CD4-positive, alpha-beta T cell (primary cell): ENCODE measurements at regions of chr5 and their contacts with region 1.

Region 1: GRCh38 chr5:157265714-157266285 is at the start of gene CYFIP2:
- DNase-seq: peak; percentile 75 to 94 (median 84)
- ATAC-seq: peak; percentile 84
- H3K4me3 ChIP-seq: peak within 1 kb of the TSS; percentile 79
- H3K4me3 Mint-ChIP-seq: peak within 1 kb of the TSS; percentile 99
- H3K27ac ChIP-seq: peak within 1 kb of the TSS; percentile 77 to 94
- H3K27ac Mint-ChIP-seq: peak within 1 kb of the TSS; percentile 97
- H3K4me1 ChIP-seq: peaks cover 63% of the 10 kb centered on the region
- H3K4me1 Mint-ChIP-seq: peaks cover 81% of the 10 kb centered on the region
- H3K27me3 ChIP-seq: no peaks in the 10 kb centered on the region
- H3K27me3 Mint-ChIP-seq: no peaks in the 10 kb centered on the region
- CTCF ChIP-seq: no peak
- total RNA-seq, gene CYFIP2: 271 to 287 TPM

Region 2: GRCh38 chr5:156715287-156715686 is 550.5 kb before region 1 on chr5:
- CTCF ChIA-PET with region 1: no interaction called
- POLR2A ChIA-PET with region 1: no interaction called
- intact Hi-C with region 1: no loop called
- DNase-seq: no peak
- ATAC-seq: no peak
- H3K4me3 ChIP-seq: no peak overlapping the region
- H3K4me3 Mint-ChIP-seq: no peak overlapping the region
- H3K27ac ChIP-seq: no peak overlapping the region
- H3K27ac Mint-ChIP-seq: no peak overlapping the region
- H3K4me1 ChIP-seq: no peaks in the 10 kb centered on the region
- H3K4me1 Mint-ChIP-seq: no peaks in the 10 kb centered on the region
- H3K27me3 ChIP-seq: no peaks in the 10 kb centered on the region
- H3K27me3 Mint-ChIP-seq: peaks cover 28% of the 10 kb centered on the region
- CTCF ChIP-seq: no peak

Region 3: DNA sequence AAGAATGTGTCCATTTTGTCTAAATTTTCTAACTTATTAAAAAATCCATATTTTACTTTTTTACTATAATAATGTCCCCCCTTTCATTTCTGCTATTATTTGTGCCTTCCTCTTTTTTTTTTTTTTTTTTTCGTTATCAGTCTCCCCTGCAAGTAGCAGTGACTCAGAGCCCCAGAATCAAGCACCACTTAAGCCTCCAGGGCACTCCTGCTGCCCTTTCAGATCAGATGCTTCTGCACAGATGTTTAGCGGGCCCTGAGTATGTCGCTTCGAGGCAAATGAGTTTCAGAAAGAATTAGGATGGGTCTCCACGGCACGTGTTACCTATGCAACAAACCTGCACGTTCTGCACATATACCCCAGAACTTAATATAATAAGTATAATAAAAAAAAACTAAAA is 134.9 kb before region 1 on chr5:
- CTCF ChIA-PET with region 1: no interaction called
- POLR2A ChIA-PET with region 1: no interaction called
- intact Hi-C with region 1: no loop called
- DNase-seq: no peak
- ATAC-seq: no peak
- H3K4me3 ChIP-seq: no peak overlapping the region
- H3K4me3 Mint-ChIP-seq: no peak overlapping the region
- H3K27ac ChIP-seq: no peak overlapping the region
- H3K27ac Mint-ChIP-seq: no peak overlapping the region
- H3K4me1 ChIP-seq: peaks cover 8% of the 10 kb centered on the region
- H3K4me1 Mint-ChIP-seq: peaks cover 33% of the 10 kb centered on the region
- H3K27me3 ChIP-seq: no peaks in the 10 kb centered on the region
- H3K27me3 Mint-ChIP-seq: no peaks in the 10 kb centered on the region
- CTCF ChIP-seq: no peak

Region 4: GRCh38 chr5:157198277-157198986 is 67.4 kb before region 1 on chr5:
- CTCF ChIA-PET with region 1: interaction called, 4 read pairs
- POLR2A ChIA-PET with region 1: interaction called, 9 read pairs
- intact Hi-C with region 1: loop called in 1 of 2 experiments (anchors 2 kb)
- DNase-seq: peak in 13 of 14 experiments; percentile 31 to 80 (median 59)
- ATAC-seq: peak; percentile 39
- H3K4me3 ChIP-seq: no peak overlapping the region
- H3K4me3 Mint-ChIP-seq: peak overlapping the region; percentile 49
- H3K27ac ChIP-seq: peak overlapping the region; percentile 63 to 79
- H3K27ac Mint-ChIP-seq: peak overlapping the region; percentile 96
- H3K4me1 ChIP-seq: peaks cover 80% of the 10 kb centered on the region
- H3K4me1 Mint-ChIP-seq: peaks cover 99% of the 10 kb centered on the region
- H3K27me3 ChIP-seq: no peaks in the 10 kb centered on the region
- H3K27me3 Mint-ChIP-seq: no peaks in the 10 kb centered on the region
- CTCF ChIP-seq: no peak

Region 5: DNA sequence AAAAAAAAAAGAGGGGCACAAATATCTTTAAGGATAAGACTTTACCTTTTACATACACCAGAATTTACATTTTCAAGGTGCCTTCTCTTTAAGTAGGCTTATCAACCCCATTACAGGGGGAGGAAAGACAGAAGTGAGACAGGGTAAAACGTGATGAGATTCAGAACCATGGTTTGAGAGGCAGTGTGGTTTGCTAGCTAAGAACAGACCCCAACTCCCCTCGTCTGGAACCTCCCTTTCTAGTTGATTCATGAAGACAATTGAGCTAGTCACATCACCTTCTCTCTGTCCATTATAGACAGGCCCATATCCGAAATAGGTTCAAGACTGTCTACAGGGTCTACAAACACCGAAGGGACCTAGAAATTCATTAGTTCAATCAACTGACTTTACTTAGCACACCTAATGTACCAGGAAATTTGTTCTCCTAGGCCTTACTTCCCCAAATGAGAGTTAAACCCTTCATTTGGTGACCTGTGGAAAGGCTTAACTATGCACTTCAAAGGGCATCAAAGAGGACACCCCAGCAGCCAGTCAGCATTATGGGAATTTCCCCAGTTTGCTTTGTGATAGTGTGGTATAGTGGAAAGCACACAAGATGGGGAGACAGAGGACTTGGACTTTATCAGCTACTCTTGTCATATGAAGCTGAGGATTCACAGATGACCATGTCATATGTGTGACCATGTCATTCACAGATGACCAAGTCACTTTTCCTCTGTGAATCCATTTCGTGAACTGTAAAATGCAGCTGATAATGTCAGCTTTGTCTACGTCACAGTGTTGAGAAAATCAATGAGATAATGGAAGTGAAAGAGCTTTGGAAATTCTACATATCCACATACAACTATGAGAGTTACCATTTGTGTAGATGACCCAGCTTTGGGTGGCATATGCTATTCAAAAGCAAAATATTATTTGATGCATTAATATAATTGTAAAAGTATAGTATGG is 40.1 kb before region 1 on chr5:
- CTCF ChIA-PET with region 1: no interaction called
- POLR2A ChIA-PET with region 1: no interaction called
- intact Hi-C with region 1: no loop called
- DNase-seq: peak in 3 of 14 experiments; percentile 32 to 76 (median 69)
- ATAC-seq: no peak
- H3K4me3 ChIP-seq: no peak overlapping the region
- H3K4me3 Mint-ChIP-seq: peak overlapping the region; percentile 20
- H3K27ac ChIP-seq: peak overlapping the region; percentile 41 to 44
- H3K27ac Mint-ChIP-seq: peak overlapping the region; percentile 80
- H3K4me1 ChIP-seq: peaks cover 65% of the 10 kb centered on the region
- H3K4me1 Mint-ChIP-seq: peaks cover 63% of the 10 kb centered on the region
- H3K27me3 ChIP-seq: no peaks in the 10 kb centered on the region
- H3K27me3 Mint-ChIP-seq: no peaks in the 10 kb centered on the region
- CTCF ChIP-seq: no peak

Region 6: GRCh38 chr5:157283434-157283833 is 17.6 kb after region 1 on chr5:
- CTCF ChIA-PET with region 1: interaction called, 3 read pairs
- POLR2A ChIA-PET with region 1: interaction called, 17 read pairs
- intact Hi-C with region 1: loop called in 1 of 2 experiments (anchors 2 kb)
- DNase-seq: peak in 5 of 14 experiments; percentile 14 to 54 (median 52)
- ATAC-seq: peak; percentile 86
- H3K4me3 ChIP-seq: no peak overlapping the region
- H3K4me3 Mint-ChIP-seq: peak overlapping the region; percentile 52
- H3K27ac ChIP-seq: peak overlapping the region in 1 of 2 donors; percentile 24
- H3K27ac Mint-ChIP-seq: peak overlapping the region; percentile 83
- H3K4me1 ChIP-seq: peaks cover 66% of the 10 kb centered on the region
- H3K4me1 Mint-ChIP-seq: peaks cover 90% of the 10 kb centered on the region
- H3K27me3 ChIP-seq: no peaks in the 10 kb centered on the region
- H3K27me3 Mint-ChIP-seq: no peaks in the 10 kb centered on the region
- CTCF ChIP-seq: no peak

Region 7: DNA sequence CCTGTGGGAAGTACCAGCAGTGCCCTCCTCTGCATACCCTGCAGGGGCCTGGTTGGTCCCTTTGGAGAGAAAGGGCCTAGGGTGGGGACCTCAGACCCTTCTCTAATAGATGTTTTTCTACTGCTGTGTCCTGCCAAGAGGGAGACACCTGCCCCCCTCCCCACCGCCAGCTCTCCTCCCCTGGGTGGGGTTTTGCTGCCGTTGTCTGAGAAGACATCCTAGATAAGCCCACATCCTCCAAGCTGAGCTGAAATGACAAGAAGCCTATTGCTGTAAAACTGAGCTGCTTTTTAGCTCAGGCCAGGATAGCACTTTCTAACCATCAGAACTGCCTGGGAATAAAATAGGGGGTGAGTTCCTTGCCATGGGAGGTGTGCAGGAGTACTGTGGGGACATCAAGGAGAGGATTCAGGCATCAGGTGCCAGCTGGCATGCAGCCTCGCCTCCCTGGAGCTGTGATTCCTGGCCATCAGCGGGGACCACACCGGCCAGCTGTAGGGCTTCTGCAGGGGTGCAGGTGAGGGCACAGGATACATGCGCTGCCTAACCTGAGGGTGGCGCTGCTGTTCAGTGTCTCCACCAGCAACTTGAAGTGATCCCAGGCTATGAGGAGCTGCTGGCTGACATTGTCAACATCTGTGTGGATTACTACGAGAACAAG is 38.0 kb after region 1 on chr5:
- CTCF ChIA-PET with region 1: interaction called, 6 read pairs
- POLR2A ChIA-PET with region 1: interaction called, 21 read pairs
- intact Hi-C with region 1: loop called in 1 of 2 experiments (anchors 5 kb)
- DNase-seq: peak; percentile 45 to 86 (median 56)
- ATAC-seq: peak; percentile 72
- H3K4me3 ChIP-seq: peak overlapping the region; percentile 42
- H3K4me3 Mint-ChIP-seq: peak overlapping the region; percentile 87
- H3K27ac ChIP-seq: peak overlapping the region; percentile 54 to 65
- H3K27ac Mint-ChIP-seq: peak overlapping the region; percentile 80
- H3K4me1 ChIP-seq: peaks cover 57% of the 10 kb centered on the region
- H3K4me1 Mint-ChIP-seq: peaks cover 70% of the 10 kb centered on the region
- H3K27me3 ChIP-seq: no peaks in the 10 kb centered on the region
- H3K27me3 Mint-ChIP-seq: no peaks in the 10 kb centered on the region
- CTCF ChIP-seq: peak; percentile 26

Region 8: GRCh38 chr5:157312492-157312891 is 46.7 kb after region 1 on chr5:
- CTCF ChIA-PET with region 1: interaction called, 6 read pairs
- POLR2A ChIA-PET with region 1: interaction called, 11 read pairs
- intact Hi-C with region 1: loop called (anchors 2 to 5 kb)
- DNase-seq: peak; percentile 41 to 88 (median 56)
- ATAC-seq: peak; percentile 92
- H3K4me3 ChIP-seq: no peak overlapping the region
- H3K4me3 Mint-ChIP-seq: peak overlapping the region; percentile 40
- H3K27ac ChIP-seq: no peak overlapping the region
- H3K27ac Mint-ChIP-seq: peak overlapping the region; percentile 73
- H3K4me1 ChIP-seq: peaks cover 46% of the 10 kb centered on the region
- H3K4me1 Mint-ChIP-seq: peaks cover 48% of the 10 kb centered on the region
- H3K27me3 ChIP-seq: no peaks in the 10 kb centered on the region
- H3K27me3 Mint-ChIP-seq: no peaks in the 10 kb centered on the region
- CTCF ChIP-seq: peak; percentile 76